Activated naive CD8-positive, alpha-beta T cell treated with anti-CD3 and anti-CD28 coated beads, Interleukin-2, amount 10 ng/mL, durations not matched to agents 7 days and 5 days (primary cell): ENCODE measurements at regions of chr10 and their contacts with region 1.

Region 1: DNA sequence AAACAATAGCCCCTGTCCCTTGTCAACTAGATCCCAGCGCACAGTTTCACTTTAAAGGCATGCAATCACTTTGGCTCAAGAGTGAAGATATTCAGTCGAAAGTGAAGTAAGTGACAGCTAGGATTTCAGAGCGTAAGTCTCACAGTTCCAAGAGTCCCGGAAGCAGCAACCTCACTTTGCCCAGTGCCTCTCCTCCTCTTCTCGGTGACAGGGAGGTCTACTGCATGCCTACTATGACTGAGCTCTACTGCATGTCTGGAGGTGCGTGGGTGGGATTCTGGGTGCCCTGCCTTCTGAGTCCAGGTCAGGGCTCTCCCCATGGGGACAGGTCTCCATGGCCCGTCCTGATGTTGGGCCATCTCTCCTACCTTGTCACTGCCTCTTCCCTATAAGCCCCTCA is 17.0 kb downstream of the PRKCQ start:
- DNase-seq: peak; percentile 50
- ATAC-seq: peak; percentile 89
- H3K4me3 Mint-ChIP-seq: peak overlapping the region; percentile 85
- H3K27ac Mint-ChIP-seq: peak overlapping the region; percentile 85
- H3K4me1 Mint-ChIP-seq: peaks cover 68% of the 10 kb centered on the region
- H3K27me3 Mint-ChIP-seq: no peaks in the 10 kb centered on the region

Region 2: GRCh38 chr10:6507311-6507710 is 55.8 kb before region 1 on chr10:
- POLR2A ChIA-PET with region 1: no interaction called
- DNase-seq: no peak
- ATAC-seq: peak; percentile 93
- H3K4me3 Mint-ChIP-seq: peak overlapping the region; percentile 65
- H3K27ac Mint-ChIP-seq: peak overlapping the region; percentile 90
- H3K4me1 Mint-ChIP-seq: peaks cover 46% of the 10 kb centered on the region
- H3K27me3 Mint-ChIP-seq: no peaks in the 10 kb centered on the region

Region 3: DNA sequence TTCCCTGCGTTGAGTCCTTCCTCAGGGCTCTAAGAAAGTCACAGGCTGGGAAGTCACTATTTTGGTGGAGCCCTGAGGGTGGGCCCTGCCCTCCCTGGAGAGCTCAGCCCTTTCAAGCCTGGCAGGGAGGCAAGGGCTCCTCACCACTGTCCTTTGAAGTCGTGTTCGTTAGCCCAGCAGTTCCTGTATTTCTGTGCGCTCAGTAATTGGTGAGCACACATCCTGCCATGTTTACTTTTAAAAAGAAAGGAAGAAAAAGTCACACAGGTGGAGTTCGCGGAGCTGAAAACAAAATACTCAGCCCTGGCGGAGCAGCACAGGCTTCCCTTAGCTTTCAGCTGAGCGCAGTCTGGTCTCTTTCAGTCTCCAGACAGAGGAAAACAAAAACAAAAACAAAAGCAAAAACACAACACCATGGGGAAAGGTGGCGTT is 20.1 kb before region 1 on chr10:
- POLR2A ChIA-PET with region 1: interaction called, 22 read pairs
- DNase-seq: peak; percentile 63
- ATAC-seq: peak; percentile 86
- H3K4me3 Mint-ChIP-seq: peak overlapping the region; percentile 95
- H3K27ac Mint-ChIP-seq: peak overlapping the region; percentile 100
- H3K4me1 Mint-ChIP-seq: peaks cover 59% of the 10 kb centered on the region
- H3K27me3 Mint-ChIP-seq: no peaks in the 10 kb centered on the region